Left ventricle myocardium inferior (tissue), 1 donor: ENCODE measurements at regions of chr4 and their contacts with region 1.

Region 1: GRCh38 chr4:184460499-184461285 is 13.7 kb downstream of the IRF2 start:
- DNase-seq: no peak
- H3K4me3 ChIP-seq: no peak overlapping the region
- H3K27ac ChIP-seq: peak overlapping the region; percentile 2
- H3K4me1 ChIP-seq: peaks cover 82% of the 10 kb centered on the region
- H3K27me3 ChIP-seq: no peaks in the 10 kb centered on the region
- CTCF ChIP-seq: no peak

Region 2: DNA sequence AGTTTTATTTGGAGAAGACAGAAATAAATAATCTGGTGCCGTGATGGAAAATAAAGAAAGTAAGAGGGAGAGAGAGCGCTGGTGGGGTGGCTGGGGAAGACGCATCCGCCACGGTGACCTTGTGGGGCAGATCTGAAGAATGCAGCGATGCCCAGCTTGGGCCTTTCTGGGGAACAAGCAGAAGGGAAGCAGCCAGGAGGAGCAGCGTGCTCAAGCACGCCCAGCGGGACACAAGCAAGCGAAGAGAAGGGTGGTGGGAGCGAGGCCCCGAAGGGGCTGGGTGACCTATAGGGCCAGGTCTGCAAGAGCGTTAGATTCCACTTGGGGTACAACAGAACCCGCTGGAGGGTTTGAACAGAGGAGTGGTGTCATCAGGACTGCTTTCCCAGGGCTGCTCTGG is 255.4 kb before region 1 on chr4:
- intact Hi-C with region 1: no loop called
- DNase-seq: no peak
- H3K4me3 ChIP-seq: no peak overlapping the region
- H3K27ac ChIP-seq: no peak overlapping the region
- H3K4me1 ChIP-seq: no peaks in the 10 kb centered on the region
- H3K27me3 ChIP-seq: no peaks in the 10 kb centered on the region
- CTCF ChIP-seq: no peak

Region 3: DNA sequence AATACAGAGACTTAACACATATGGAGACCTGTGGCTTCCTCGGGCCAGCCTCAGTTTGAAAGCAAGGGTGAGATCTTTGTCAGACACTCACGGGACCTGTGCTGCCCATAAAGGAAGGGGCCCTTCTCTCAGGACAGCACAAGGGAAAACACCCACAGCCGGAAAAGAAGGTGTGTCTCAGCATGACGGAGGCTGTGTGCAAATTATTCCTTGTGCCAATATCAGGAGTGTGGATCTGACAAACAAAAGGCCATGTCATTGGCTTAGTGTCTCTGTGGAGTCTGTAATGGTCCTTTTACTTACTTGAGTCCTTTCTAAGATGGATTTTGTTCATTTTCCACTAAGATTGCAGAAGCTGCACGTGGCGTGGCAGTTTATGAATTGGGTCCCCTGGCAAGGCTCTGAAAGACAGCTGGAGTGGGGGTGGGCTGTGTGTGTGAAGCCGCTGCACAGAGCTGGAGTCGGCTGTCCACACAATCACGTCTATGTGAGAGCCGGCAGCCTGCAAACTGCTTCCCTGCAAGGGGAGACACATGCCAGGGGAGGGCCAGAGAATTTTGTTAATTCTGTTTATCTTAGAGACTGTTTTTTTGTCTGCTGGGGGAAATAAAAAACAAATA is 244.9 kb before region 1 on chr4:
- intact Hi-C with region 1: no loop called
- DNase-seq: no peak
- H3K4me3 ChIP-seq: no peak overlapping the region
- H3K27ac ChIP-seq: no peak overlapping the region
- H3K4me1 ChIP-seq: no peaks in the 10 kb centered on the region
- H3K27me3 ChIP-seq: peaks cover 4% of the 10 kb centered on the region
- CTCF ChIP-seq: no peak

Region 4: GRCh38 chr4:184389978-184390900 is 70.5 kb before region 1 on chr4:
- intact Hi-C with region 1: no loop called
- DNase-seq: no peak
- H3K4me3 ChIP-seq: peak overlapping the region; percentile 6
- H3K27ac ChIP-seq: peak overlapping the region; percentile 93
- H3K4me1 ChIP-seq: peaks cover 87% of the 10 kb centered on the region
- H3K27me3 ChIP-seq: no peaks in the 10 kb centered on the region
- CTCF ChIP-seq: no peak

Region 5: GRCh38 chr4:184400375-184400870 is 60.3 kb before region 1 on chr4:
- intact Hi-C with region 1: loop called (anchors 10 kb)
- DNase-seq: no peak
- H3K4me3 ChIP-seq: no peak overlapping the region
- H3K27ac ChIP-seq: peak overlapping the region; percentile 93
- H3K4me1 ChIP-seq: peaks cover 86% of the 10 kb centered on the region
- H3K27me3 ChIP-seq: no peaks in the 10 kb centered on the region
- CTCF ChIP-seq: no peak

Region 6: GRCh38 chr4:184538023-184538599 is 77.4 kb after region 1 on chr4:
- intact Hi-C with region 1: no loop called
- DNase-seq: peak; percentile 91
- H3K4me3 ChIP-seq: peak overlapping the region; percentile 71
- H3K27ac ChIP-seq: peak overlapping the region; percentile 95
- H3K4me1 ChIP-seq: peaks cover 40% of the 10 kb centered on the region
- H3K27me3 ChIP-seq: no peaks in the 10 kb centered on the region
- CTCF ChIP-seq: peak; percentile 84